RWPE1 (cell line): ENCODE measurements at regions of chr2 and their contacts with region 1.

Region 1: GRCh38 chr2:158968396-158969161 is at the start of gene TANC1:
- DNase-seq: peak; percentile 89
- H3K27ac ChIP-seq: peak within 1 kb of the TSS; percentile 97
- CTCF ChIP-seq: no peak

Region 2: GRCh38 chr2:158926478-158926948 is 42.1 kb before region 1 on chr2:
- CTCF ChIA-PET with region 1: no interaction called
- POLR2A ChIA-PET with region 1: no interaction called
- DNase-seq: peak; percentile 34
- H3K27ac ChIP-seq: no peak overlapping the region
- CTCF ChIP-seq: no peak

Region 3: GRCh38 chr2:158989165-158989564 is 20.6 kb after region 1 on chr2:
- CTCF ChIA-PET with region 1: interaction called, 5 read pairs
- POLR2A ChIA-PET with region 1: interaction called, 11 read pairs
- DNase-seq: no peak
- H3K27ac ChIP-seq: peak overlapping the region; percentile 98
- CTCF ChIP-seq: no peak

Region 4: GRCh38 chr2:159090514-159091201 is 122.1 kb after region 1 on chr2:
- CTCF ChIA-PET with region 1: no interaction called
- POLR2A ChIA-PET with region 1: no interaction called
- DNase-seq: peak; percentile 75
- H3K27ac ChIP-seq: peak overlapping the region; percentile 94
- CTCF ChIP-seq: no peak